Spleen (tissue), 13 donors: ENCODE measurements at regions of chr5 and their contacts with region 1.

Region 1: GRCh38 chr5:56200856-56201666 is 32.1 kb downstream of the ANKRD55 start:
- DNase-seq: no peak
- H3K4me3 ChIP-seq: no peak overlapping the region
- H3K27ac ChIP-seq: peak overlapping the region in 4 of 8 donors; percentile 0 to 37 (median 32)
- H3K4me1 ChIP-seq: peaks cover 4 to 28% (median 19%) of the 10 kb centered on the region in 6 donors
- H3K27me3 ChIP-seq: no peaks in the 10 kb centered on the region
- CTCF ChIP-seq: peak; percentile 52 to 84 (median 75)
- POLR2A ChIP-seq: no peak

Region 2: DNA sequence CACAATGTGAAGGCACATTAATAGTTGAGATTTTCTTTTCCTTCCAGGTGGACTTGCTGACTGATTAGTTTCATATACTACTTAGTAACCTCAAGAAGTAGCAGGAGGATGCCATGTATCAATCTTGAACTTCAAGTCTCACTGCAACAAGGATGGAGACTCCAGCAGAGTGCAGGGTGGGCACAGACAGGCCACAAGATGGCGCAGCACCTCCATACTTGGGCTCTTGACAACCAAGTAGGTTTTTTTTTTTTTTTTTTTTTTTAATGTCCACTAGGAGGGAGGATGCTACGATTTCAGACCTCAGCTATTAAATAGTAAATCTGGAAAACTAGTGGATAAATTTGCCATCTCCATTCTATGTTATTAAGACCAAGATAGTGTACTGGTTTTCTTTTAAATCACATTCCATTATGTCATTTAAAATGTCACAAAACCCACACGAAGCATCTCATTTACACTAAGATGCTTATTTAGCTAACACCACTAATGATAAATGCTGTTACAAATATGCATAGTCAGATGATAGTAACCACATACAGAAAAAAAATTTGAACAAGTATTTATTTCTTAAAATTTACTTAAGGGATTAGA is 264.9 kb before region 1 on chr5:
- intact Hi-C with region 1: loop called (anchors 10 kb)
- DNase-seq: peak; percentile 91
- H3K4me3 ChIP-seq: no peak overlapping the region
- H3K27ac ChIP-seq: no peak overlapping the region
- H3K4me1 ChIP-seq: no peaks in the 10 kb centered on the region
- H3K27me3 ChIP-seq: no peaks in the 10 kb centered on the region
- CTCF ChIP-seq: peak; percentile 73 to 92 (median 84)
- POLR2A ChIP-seq: no peak

Region 3: DNA sequence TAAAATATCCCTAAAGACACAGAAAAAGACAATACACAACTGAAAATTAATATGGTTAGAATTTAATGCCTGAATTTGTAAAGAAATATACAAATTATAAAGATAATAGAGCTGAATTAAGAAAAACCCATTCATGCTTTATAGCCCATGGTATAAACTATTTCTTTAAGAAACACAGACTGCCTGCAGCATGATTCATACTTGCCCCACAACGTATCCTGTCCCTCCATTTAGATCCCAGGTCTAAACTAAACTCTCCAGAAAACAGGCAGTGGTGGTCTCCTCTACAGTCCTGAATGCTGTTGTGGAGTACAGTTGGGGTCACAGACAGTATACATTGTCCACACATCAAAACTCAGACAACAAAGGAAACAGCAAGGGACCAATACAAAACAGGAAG is 231.1 kb before region 1 on chr5:
- intact Hi-C with region 1: loop called (anchors 10 kb)
- DNase-seq: no peak
- H3K4me3 ChIP-seq: no peak overlapping the region
- H3K27ac ChIP-seq: no peak overlapping the region
- H3K4me1 ChIP-seq: peaks cover 0 to 67% (median 13%) of the 10 kb centered on the region in 6 donors
- H3K27me3 ChIP-seq: no peaks in the 10 kb centered on the region
- CTCF ChIP-seq: no peak
- POLR2A ChIP-seq: no peak